Activated CD4-positive, alpha-beta T cell treated with anti-CD3 and anti-CD28 coated beads for 36 hours (primary cell): ENCODE measurements at regions of chr2 and their contacts with region 1.

Region 1: GRCh38 chr2:43595603-43596412 is at the start of gene THADA:
- DNase-seq: peak; percentile 99
- ATAC-seq: peak; percentile 97
- H3K4me3 Mint-ChIP-seq: peak within 1 kb of the TSS; percentile 89
- H3K27ac Mint-ChIP-seq: peak within 1 kb of the TSS; percentile 98
- H3K4me1 Mint-ChIP-seq: peaks cover 34% of the 10 kb centered on the region
- H3K27me3 Mint-ChIP-seq: peaks cover 2% of the 10 kb centered on the region
- total RNA-seq, gene THADA: 32.5 to 36.6 TPM

Region 2: GRCh38 chr2:43569921-43570320 is 25.9 kb before region 1 on chr2:
- CTCF ChIA-PET with region 1: interaction called, 4 read pairs
- POLR2A ChIA-PET with region 1: interaction called, 13 read pairs
- intact Hi-C with region 1: no loop called
- DNase-seq: peak; percentile 34
- ATAC-seq: peak; percentile 83
- H3K4me3 Mint-ChIP-seq: no peak overlapping the region
- H3K27ac Mint-ChIP-seq: peak overlapping the region; percentile 68
- H3K4me1 Mint-ChIP-seq: peaks cover 49% of the 10 kb centered on the region
- H3K27me3 Mint-ChIP-seq: no peaks in the 10 kb centered on the region

Region 3: DNA sequence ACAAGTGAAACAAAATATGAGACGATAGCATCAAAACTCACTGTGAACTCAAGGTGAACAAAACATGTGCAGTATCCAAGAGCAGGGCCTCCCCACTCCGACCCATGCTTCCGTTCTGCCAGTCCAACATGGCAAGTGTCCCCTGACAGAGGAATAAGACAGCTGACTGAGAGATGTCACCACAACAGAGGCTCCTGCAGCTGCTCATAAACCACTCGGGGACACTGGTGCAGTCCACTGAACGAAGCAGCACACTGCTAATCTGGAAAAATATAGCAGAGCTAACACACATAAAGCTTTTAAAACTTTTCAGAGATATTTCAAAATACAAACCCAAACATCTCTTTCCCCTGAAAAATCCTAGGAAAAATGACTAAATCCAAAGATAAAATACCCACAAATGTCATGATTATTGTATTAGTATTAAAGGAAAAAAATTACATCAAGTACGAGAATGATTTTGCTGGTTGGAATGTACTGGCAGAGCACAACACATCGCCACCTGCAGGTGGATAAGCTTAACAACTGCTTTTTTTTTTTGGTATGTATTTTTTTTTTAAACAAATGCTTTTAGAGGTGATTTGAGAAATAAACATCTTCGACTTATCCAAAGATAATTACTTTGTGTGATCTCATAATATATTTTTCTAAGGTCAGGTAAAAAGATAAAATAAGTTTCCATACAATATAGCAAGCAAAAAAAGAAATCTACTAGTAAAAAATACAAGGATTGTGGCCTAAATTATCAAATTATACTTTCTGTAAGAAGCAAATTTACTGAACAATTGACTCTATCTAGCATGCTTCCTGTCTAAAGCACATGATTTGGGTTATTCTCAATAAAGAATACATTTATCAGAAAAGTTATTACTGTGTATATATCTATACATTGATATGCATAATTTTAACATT is 18.6 kb before region 1 on chr2:
- CTCF ChIA-PET with region 1: interaction called, 10 read pairs
- POLR2A ChIA-PET with region 1: interaction called, 3 read pairs
- intact Hi-C with region 1: loop called in 1 of 2 experiments (anchors 1 kb)
- DNase-seq: peak; percentile 46
- ATAC-seq: peak; percentile 42
- H3K4me3 Mint-ChIP-seq: no peak overlapping the region
- H3K27ac Mint-ChIP-seq: no peak overlapping the region
- H3K4me1 Mint-ChIP-seq: peaks cover 15% of the 10 kb centered on the region
- H3K27me3 Mint-ChIP-seq: no peaks in the 10 kb centered on the region

Region 4: DNA sequence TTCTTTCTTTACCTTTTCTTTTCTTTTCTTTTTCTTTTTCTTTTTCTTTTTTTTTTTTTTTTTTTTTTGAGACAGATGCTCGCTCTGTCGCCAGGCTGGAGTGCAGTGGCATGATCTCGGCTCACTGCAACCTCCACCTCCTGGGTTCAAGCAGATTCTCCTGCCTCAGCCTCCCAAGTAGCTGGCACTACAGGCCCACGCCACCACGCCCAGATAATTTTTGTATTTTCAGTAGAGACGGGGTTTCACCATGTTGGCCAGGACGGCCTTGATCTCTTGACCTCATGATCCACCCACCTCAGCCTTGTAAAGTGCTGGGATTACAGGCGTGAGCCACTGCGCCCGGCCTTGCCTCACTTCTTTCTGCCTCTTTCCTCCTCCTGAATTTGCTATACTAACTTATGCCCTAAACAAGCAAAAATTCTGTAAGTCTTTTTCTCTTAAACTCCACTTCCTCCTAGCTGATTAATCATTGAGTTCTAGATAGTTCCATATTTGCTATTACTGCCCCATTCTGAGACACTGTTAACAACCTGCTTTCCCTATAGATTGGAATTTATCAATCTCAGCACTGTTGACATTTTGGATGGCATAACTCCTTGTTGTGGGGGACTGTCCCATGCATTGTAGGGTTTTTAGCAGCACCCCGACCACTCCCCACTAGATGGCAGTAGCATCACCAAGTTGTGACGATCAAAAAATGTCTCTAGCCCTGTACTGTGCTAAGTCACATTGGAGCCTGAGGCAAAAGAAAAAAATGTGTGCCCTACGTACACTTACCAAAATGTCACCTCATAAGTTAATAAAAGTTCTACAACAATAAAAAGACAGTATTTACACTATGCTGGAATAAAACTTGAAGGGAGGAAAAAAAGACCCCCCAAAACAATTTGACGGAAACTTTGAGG is 16.4 kb after region 1 on chr2:
- CTCF ChIA-PET with region 1: interaction called, 15 read pairs
- POLR2A ChIA-PET with region 1: no interaction called
- intact Hi-C with region 1: no loop called
- DNase-seq: peak; percentile 84
- ATAC-seq: peak; percentile 96
- H3K4me3 Mint-ChIP-seq: no peak overlapping the region
- H3K27ac Mint-ChIP-seq: peak overlapping the region; percentile 40
- H3K4me1 Mint-ChIP-seq: peaks cover 2% of the 10 kb centered on the region
- H3K27me3 Mint-ChIP-seq: peaks cover 5% of the 10 kb centered on the region

Region 5: GRCh38 chr2:43637030-43637803 is 41.4 kb after region 1 on chr2 and contains the start of gene PLEKHH2:
- CTCF ChIA-PET with region 1: no interaction called
- POLR2A ChIA-PET with region 1: no interaction called
- intact Hi-C with region 1: loop called in 1 of 2 experiments (anchors 1 kb)
- DNase-seq: peak; percentile 94
- ATAC-seq: peak; percentile 100
- H3K4me3 Mint-ChIP-seq: peak within 1 kb of the TSS; percentile 80
- H3K27ac Mint-ChIP-seq: peak within 1 kb of the TSS; percentile 32
- H3K4me1 Mint-ChIP-seq: peaks cover 14% of the 10 kb centered on the region
- H3K27me3 Mint-ChIP-seq: peaks cover 31% of the 10 kb centered on the region
- total RNA-seq, gene PLEKHH2: 1.5 to 2.2 TPM

Region 6: GRCh38 chr2:43653506-43653905 is 57.7 kb after region 1 on chr2:
- CTCF ChIA-PET with region 1: no interaction called
- POLR2A ChIA-PET with region 1: no interaction called
- intact Hi-C with region 1: no loop called
- DNase-seq: no peak
- ATAC-seq: no peak
- H3K4me3 Mint-ChIP-seq: no peak overlapping the region
- H3K27ac Mint-ChIP-seq: no peak overlapping the region
- H3K4me1 Mint-ChIP-seq: no peaks in the 10 kb centered on the region
- H3K27me3 Mint-ChIP-seq: peaks cover 10% of the 10 kb centered on the region

Region 7: GRCh38 chr2:43773876-43774613 is 178.2 kb after region 1 on chr2 and contains the start of gene DYNC2LI1:
- CTCF ChIA-PET with region 1: no interaction called
- POLR2A ChIA-PET with region 1: no interaction called
- intact Hi-C with region 1: loop called in 1 of 2 experiments (anchors 1 kb)
- DNase-seq: peak; percentile 92
- ATAC-seq: peak; percentile 94
- H3K4me3 Mint-ChIP-seq: peak within 1 kb of the TSS; percentile 95
- H3K27ac Mint-ChIP-seq: peak within 1 kb of the TSS; percentile 74
- H3K4me1 Mint-ChIP-seq: peaks cover 29% of the 10 kb centered on the region
- H3K27me3 Mint-ChIP-seq: no peaks in the 10 kb centered on the region
- total RNA-seq, gene DYNC2LI1: 19.5 to 28.4 TPM

Region 8: GRCh38 chr2:43995733-43996533 is 400.1 kb after region 1 on chr2 and contains the start of gene LRPPRC:
- CTCF ChIA-PET with region 1: no interaction called
- POLR2A ChIA-PET with region 1: no interaction called
- intact Hi-C with region 1: loop called in 1 of 2 experiments (anchors 1 kb)
- DNase-seq: peak; percentile 95
- ATAC-seq: peak; percentile 97
- H3K4me3 Mint-ChIP-seq: peak within 1 kb of the TSS; percentile 81
- H3K27ac Mint-ChIP-seq: peak within 1 kb of the TSS; percentile 92
- H3K4me1 Mint-ChIP-seq: peaks cover 36% of the 10 kb centered on the region
- H3K27me3 Mint-ChIP-seq: no peaks in the 10 kb centered on the region
- total RNA-seq, gene LRPPRC: 189 to 191 TPM

Region 9: DNA sequence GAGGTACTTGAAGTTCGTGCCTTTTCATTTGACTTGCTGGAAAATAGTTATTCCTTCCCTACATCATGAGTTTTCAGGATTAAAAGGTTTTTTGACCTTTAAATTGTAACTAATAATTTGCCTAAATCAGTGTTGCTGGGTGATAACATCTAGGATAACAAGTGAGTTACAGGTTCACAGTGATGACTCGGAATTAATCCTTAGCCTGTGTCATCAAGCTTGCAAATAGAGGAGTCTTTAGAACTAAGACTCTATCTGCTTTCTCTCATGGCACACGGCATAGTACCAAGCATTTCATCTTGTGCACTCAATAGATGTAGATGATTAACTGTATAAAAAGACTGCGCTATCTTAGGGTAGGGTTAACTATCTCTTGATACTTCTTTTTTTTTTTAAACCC is 845.4 kb after region 1 on chr2:
- CTCF ChIA-PET with region 1: no interaction called
- POLR2A ChIA-PET with region 1: no interaction called
- intact Hi-C with region 1: no loop called
- DNase-seq: no peak
- ATAC-seq: no peak
- H3K4me3 Mint-ChIP-seq: no peak overlapping the region
- H3K27ac Mint-ChIP-seq: no peak overlapping the region
- H3K4me1 Mint-ChIP-seq: no peaks in the 10 kb centered on the region
- H3K27me3 Mint-ChIP-seq: no peaks in the 10 kb centered on the region